ENCODE measurements at regions of chr4 and their contacts with region 1.

Region 1: GRCh38 chr4:143939528-143939927 is 34.2 kb upstream of the GYPE start:
- H3K4me3 ChIP-seq: no peak overlapping the region
- H3K27ac ChIP-seq: no peak overlapping the region
- H3K4me1 ChIP-seq: no peaks in the 10 kb centered on the region
- CTCF ChIP-seq: no peak

Region 2: DNA sequence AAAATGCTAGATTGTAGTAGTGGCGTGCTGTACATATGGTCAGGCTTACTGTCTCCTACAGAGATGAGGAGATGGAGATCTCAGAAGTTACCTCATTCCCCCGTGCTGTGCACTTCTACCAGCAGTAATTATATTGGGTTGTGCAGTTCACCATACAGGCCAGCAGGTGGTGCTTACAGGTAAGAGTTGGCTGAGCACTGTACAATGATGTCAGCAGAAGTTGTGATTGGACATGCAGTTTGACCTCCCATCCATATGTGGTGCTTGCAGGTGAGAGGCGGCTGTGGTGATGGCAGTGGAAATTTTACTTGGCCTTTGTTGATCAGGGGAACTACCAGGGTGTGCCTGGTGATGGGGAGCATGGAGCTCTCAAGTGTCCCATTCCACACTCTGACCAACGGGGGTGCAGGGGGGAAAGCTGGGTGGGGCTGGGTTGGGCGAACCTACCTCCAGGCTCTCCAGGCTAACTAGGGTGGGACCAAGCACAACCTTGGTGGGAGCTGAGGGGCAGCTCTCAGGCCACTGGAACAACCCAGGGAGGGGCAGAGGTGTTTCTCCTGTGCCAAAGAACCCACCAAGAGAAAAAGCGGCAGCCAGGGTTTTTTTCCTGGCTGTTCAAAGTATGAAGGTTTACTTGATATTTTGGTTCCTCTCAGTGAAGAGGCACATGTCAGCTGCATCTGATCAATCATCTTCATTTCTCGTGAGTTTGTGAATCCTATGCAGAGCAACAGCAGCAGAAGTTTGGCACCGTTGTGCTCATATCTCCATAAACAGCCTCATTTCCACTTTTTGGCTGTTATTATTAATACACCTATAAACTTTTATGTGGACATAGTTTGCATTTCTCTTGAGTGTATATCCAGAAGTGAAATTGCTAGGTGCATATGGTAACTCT is 165.3 kb before region 1 on chr4:
- CTCF ChIA-PET with region 1: no interaction called
- POLR2A ChIA-PET with region 1: interaction called, 11 read pairs
- H3K4me3 ChIP-seq: no peak overlapping the region
- H3K27ac ChIP-seq: no peak overlapping the region
- H3K4me1 ChIP-seq: no peaks in the 10 kb centered on the region
- CTCF ChIP-seq: 0 out of 2 replicates have a peak, but pooled peaks have one; percentile 17

Region 3: DNA sequence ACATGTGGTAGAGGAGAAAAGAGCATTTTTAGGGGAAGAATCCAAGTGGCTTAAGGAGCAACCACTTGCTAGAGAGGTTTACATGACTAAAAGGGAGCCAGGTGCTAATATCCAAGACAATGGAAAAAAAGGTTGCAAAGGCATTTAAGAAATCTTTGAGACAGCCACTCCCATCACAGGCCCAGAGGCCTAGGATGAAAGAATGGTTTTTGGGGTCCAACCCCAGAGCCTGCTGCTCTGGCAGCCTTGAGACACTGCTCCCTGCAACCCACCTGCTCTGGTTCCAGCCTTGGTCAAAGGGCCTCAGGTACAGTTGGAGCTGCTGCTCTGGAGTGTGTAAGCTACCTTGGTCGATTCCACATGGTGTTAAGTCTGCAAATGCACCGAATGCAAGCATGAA is 155.0 kb before region 1 on chr4:
- CTCF ChIA-PET with region 1: no interaction called
- POLR2A ChIA-PET with region 1: no interaction called
- H3K4me3 ChIP-seq: no peak overlapping the region
- H3K27ac ChIP-seq: no peak overlapping the region
- H3K4me1 ChIP-seq: no peaks in the 10 kb centered on the region
- CTCF ChIP-seq: no peak